ENCODE measurements at regions of chr1 and their contacts with region 1.

Region 1: DNA sequence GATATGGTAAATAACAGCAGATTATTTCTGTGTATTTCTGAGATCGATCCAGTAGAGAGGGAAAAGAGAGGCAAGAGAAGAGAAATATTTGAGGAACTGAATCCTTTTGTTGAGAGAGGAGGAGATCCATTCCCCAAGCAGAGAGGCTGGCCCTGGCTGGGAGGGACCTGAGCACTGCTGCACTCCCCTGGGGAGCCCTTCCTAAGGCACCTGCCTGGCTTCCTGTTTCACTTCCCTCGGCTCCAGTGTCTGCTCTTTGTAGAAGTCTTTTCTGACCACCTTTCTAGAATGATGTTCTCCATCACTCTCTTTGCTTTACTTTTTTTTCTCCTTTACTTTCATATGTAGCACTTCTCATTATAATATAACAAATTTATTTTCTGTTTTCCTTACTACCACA is 42.3 kb upstream of the SLC6A9 start:
- DNase-seq: no peak
- ATAC-seq: no peak
- H3K4me3 ChIP-seq: no peak overlapping the region
- H3K27ac ChIP-seq: no peak overlapping the region
- H3K4me1 ChIP-seq: no peaks in the 10 kb centered on the region
- H3K27me3 ChIP-seq: no peaks in the 10 kb centered on the region
- CTCF ChIP-seq: no peak

Region 2: GRCh38 chr1:44059956-44060355 is 13.6 kb before region 1 on chr1:
- CTCF ChIA-PET with region 1: no interaction called
- POLR2A ChIA-PET with region 1: no interaction called
- in situ Hi-C with region 1: no loop called
- intact Hi-C with region 1: loop called (anchors 2 kb)
- DNase-seq: no peak
- ATAC-seq: no peak
- H3K4me3 ChIP-seq: no peak overlapping the region
- H3K27ac ChIP-seq: no peak overlapping the region
- H3K4me1 ChIP-seq: no peaks in the 10 kb centered on the region
- H3K27me3 ChIP-seq: no peaks in the 10 kb centered on the region
- CTCF ChIP-seq: no peak

Region 3: DNA sequence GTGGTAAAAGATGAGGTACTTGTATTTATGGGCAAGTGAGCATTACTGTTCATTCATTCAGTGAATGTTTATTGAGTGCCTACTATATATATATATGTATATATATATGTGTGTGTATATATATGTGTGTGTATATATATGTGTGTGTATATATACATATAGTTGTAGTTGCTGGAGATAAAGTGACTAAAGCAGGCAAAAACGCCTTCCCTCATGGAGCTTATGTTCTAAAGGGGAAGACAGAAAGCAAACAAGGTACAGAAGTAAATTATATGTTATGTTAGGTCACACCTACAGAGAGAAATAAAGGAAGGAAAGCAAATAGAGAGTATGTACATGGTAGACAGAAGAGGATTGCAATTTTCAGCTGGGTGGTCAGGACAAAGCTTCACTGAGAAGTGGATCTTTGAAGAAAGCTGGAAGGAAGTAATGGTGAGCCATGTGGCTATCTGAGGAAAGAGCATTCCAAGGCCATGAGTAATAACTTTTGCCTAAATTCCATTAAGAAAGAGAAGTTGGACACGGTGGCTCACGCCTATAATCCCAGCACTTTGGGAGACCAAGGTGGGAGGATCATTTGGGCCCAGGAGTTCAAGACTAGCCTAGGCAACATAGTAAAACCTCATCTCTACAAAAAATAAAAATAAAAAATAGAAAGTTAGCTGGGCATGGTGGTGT is 11.6 kb after region 1 on chr1:
- CTCF ChIA-PET with region 1: interaction called, 11 read pairs
- POLR2A ChIA-PET with region 1: interaction called, 6 read pairs
- in situ Hi-C with region 1: no loop called
- intact Hi-C with region 1: no loop called
- DNase-seq: peak; percentile 15
- ATAC-seq: peak; percentile 69
- H3K4me3 ChIP-seq: no peak overlapping the region
- H3K27ac ChIP-seq: no peak overlapping the region
- H3K4me1 ChIP-seq: no peaks in the 10 kb centered on the region
- H3K27me3 ChIP-seq: no peaks in the 10 kb centered on the region; the same call in 1 of the 2 replicates
- CTCF ChIP-seq: no peak

Region 4: DNA sequence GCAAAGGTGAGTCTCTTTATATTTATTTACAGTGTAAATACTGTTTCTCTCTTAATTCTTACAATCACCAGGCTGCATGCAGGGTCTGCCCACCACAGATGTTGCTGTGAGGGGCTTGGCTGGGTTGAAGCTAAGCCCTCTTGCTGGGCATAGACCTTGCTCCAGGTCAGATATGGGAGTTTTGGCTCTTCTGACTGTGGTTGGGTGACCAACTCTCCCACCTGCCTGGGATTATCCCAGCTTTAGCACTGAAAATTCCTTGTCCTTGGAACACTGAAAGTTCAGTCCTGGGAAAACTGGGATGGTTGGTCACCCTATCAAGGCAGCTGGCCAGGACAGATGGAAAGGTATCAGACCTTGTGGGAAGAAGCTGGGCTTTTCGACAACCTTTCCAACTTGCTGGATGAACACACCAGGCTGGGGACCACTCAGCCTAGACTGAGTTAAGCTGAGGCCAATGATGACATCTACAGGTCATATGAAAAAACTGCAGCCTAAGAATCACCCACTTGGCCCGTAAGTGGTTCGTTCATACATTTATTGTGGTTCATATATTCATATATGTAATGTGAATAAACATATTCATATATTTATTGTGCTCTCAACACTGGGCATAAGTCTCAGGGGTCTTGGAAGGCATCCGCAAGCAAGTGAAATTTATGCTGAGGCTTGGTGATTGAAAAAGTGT is 1226.6 kb after region 1 on chr1:
- CTCF ChIA-PET with region 1: no interaction called
- POLR2A ChIA-PET with region 1: no interaction called
- in situ Hi-C with region 1: no loop called
- intact Hi-C with region 1: no loop called
- DNase-seq: peak; percentile 65
- ATAC-seq: peak; percentile 39; the same call in 1 of the 2 replicates
- H3K4me3 ChIP-seq: no peak overlapping the region
- H3K27ac ChIP-seq: no peak overlapping the region
- H3K4me1 ChIP-seq: peaks cover 8% of the 10 kb centered on the region
- H3K27me3 ChIP-seq: no peaks in the 10 kb centered on the region
- CTCF ChIP-seq: peak; percentile 86

Measured in Panc1 (cell line).